Stomach (tissue), 19 donors: ENCODE measurements at regions of chr12 and their contacts with region 1.

Region 1: DNA sequence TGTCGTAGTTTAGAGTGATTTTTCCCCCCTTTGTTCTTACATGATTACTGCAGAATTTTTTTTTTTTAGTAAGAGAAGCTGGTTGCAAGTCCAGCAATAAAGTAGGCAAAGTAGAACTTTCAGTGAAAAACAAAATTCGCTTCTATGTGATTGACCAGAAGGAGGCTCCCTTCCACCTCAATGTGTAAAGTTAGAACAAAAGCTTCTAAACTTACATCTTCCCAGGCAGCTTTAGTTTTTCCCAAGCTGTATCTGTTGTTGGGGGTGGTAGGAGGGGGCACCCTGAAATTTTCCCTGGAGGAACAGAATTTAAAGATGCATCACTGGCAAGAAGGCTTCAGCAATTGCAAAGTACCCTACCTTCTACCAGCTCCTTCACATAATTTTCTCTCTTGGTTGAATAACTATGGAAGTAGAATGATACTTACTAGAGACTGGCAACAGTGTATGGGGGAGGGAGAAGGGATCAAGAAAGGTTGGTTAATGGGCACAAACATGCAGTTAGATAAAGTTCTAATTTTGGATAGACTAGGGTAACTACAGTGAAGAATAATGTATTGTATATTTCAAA is 87.3 kb upstream of the E2F7 start:
- DNase-seq: peak in 1 of 2 donors; percentile 75
- H3K4me3 ChIP-seq: no peak overlapping the region
- H3K27ac ChIP-seq: no peak overlapping the region
- H3K4me1 ChIP-seq: no peaks in the 10 kb centered on the region
- H3K27me3 ChIP-seq: no peaks in the 10 kb centered on the region
- CTCF ChIP-seq: peak in 3 of 7 experiments; percentile 12 to 42 (median 29)
- EP300 ChIP-seq: no peak
- POLR2A ChIP-seq: no peak

Region 2: DNA sequence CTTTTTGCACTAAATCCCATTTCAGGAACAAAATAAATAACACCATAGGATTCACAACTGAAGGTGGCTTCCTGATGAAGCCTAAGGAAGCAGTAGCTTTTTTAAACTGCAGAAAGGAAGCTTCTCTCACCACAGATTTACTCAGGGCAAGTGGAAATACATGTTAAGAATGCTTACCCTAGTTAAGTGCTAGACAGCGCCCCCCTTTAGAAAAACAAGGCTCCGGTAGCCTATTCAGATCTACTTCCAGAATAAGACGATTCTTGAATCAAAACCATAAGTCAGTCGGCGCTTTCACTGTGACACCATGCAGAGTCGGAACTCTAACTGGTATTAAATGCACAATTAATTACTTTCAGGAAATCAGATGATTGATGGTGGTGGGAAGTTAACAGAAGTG is 129.2 kb before region 1 on chr12:
- intact Hi-C with region 1: no loop called
- DNase-seq: no peak
- H3K4me3 ChIP-seq: no peak overlapping the region
- H3K27ac ChIP-seq: no peak overlapping the region
- H3K4me1 ChIP-seq: no peaks in the 10 kb centered on the region
- H3K27me3 ChIP-seq: no peaks in the 10 kb centered on the region
- CTCF ChIP-seq: no peak
- EP300 ChIP-seq: no peak
- POLR2A ChIP-seq: no peak

Region 3: GRCh38 chr12:77685112-77685511 is 532.4 kb after region 1 on chr12:
- intact Hi-C with region 1: loop called (anchors 10 kb)
- DNase-seq: peak; percentile 58 to 90
- H3K4me3 ChIP-seq: no peak overlapping the region
- H3K27ac ChIP-seq: no peak overlapping the region
- H3K4me1 ChIP-seq: no peaks in the 10 kb centered on the region
- H3K27me3 ChIP-seq: no peaks in the 10 kb centered on the region
- CTCF ChIP-seq: peak in 4 of 7 experiments; percentile 41 to 61 (median 48)
- EP300 ChIP-seq: no peak
- POLR2A ChIP-seq: no peak